Dendritic cell treated with granulocyte-macrophage colony-stimulating factor and Interleukin-4, amounts not matched to agents 40 ng/mL and 50 ng/mL, for 4 days (primary cell): ENCODE measurements at regions of chr9 and their contacts with region 1.

Region 1: DNA sequence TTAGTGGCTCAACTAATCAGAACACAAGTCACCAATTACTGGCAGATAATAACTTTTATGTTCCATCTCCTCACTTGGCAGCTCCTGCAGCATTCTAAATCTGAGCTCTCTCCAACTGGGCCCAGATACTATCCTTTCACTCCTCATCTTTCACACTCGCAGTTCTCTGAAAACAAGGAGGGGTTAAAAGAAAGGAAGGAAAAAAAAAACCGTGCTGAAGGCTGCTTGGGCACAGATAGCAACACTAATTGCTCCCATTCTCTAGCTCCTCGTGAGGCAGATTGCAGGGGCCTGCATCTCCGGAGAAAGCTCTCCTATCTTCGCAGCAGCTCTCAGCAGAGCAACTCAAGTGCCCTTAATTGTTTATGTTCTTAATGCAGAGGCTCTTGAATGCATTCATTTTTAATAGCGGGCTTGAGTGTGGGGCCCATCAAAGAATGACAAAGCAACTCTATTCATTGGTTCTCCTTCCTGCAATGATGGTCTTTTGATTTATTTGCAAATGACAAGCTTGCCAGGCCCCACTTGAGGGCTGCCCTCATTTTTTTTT is 23.9 kb downstream of the TLE1 start:
- H3K4me3 Mint-ChIP-seq: no peak overlapping the region
- H3K27ac Mint-ChIP-seq: no peak overlapping the region
- H3K4me1 Mint-ChIP-seq: peaks cover 9% of the 10 kb centered on the region
- H3K27me3 Mint-ChIP-seq: no peaks in the 10 kb centered on the region

Region 2: GRCh38 chr9:81592887-81593266 is 72.5 kb before region 1 on chr9:
- intact Hi-C with region 1: loop called (anchors 10 kb)
- H3K4me3 Mint-ChIP-seq: peak overlapping the region; percentile 4
- H3K27ac Mint-ChIP-seq: peak overlapping the region; percentile 6
- H3K4me1 Mint-ChIP-seq: peaks cover 20% of the 10 kb centered on the region
- H3K27me3 Mint-ChIP-seq: no peaks in the 10 kb centered on the region

Region 3: DNA sequence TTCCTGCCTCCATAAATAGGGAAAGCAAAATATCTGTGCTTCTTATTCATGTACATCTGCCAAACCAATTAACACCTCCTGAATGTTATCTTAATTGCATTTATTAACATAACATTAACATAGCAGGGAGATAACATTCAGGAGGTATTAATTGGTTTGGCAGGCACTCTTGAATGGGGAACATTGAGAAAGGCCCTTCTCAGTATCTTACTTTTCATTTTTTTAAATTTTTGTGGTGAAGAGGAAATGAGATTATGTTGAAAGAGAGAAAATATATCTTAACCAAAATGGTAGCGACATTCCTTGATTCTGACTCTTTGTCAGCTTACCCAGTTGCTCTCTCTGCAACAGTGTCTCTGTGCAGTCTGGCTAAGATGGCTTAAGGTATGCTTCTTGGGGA is 124.3 kb after region 1 on chr9:
- intact Hi-C with region 1: no loop called
- H3K4me3 Mint-ChIP-seq: no peak overlapping the region
- H3K27ac Mint-ChIP-seq: no peak overlapping the region
- H3K4me1 Mint-ChIP-seq: peaks cover 5% of the 10 kb centered on the region
- H3K27me3 Mint-ChIP-seq: no peaks in the 10 kb centered on the region